BJ (cell line): ENCODE measurements at regions of chr17 and their contacts with region 1.

Region 1: GRCh38 chr17:42067351-42068091 is 17.1 kb upstream of the C17orf113 start:
- DNase-seq: no peak
- H3K4me3 ChIP-seq: no peak overlapping the region
- H3K27me3 ChIP-seq: peaks cover 13% of the 10 kb centered on the region
- CTCF ChIP-seq: peak; percentile 84

Region 2: DNA sequence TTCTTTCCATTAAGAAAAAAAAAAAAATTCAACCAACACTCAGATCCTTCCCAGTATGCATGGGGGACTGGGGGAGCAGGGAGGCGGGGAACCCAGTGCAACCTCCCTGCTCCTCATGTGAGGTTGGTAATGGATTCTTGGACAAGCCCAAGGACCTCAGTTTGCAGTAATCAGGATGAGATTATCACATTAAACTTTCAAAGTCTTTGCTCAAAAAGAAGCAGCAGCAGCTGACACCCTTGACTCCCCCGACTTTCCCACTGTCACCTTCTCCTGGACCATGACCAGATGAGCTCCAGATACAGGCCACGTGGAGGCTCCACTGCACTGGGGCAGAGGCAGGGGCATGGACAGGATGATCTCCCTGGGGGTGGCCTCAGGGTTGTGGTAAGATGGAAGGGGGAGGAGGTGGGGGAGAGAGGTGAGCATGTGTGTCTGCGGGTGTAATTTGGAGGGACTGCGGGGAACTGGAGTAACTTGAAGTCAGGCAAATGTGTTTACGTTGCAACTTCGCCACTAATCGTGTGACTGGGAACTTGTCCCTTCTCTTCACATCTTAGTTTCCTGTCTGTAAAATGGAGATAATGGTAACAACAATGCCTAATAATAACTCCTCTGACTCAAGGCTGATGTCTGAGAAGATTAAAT is 11.0 kb after region 1 on chr17:
- CTCF ChIA-PET with region 1: interaction called, 23 read pairs
- POLR2A ChIA-PET with region 1: no interaction called
- DNase-seq: no peak
- H3K4me3 ChIP-seq: no peak overlapping the region
- H3K27me3 ChIP-seq: peaks cover 14% of the 10 kb centered on the region
- CTCF ChIP-seq: no peak

Region 3: DNA sequence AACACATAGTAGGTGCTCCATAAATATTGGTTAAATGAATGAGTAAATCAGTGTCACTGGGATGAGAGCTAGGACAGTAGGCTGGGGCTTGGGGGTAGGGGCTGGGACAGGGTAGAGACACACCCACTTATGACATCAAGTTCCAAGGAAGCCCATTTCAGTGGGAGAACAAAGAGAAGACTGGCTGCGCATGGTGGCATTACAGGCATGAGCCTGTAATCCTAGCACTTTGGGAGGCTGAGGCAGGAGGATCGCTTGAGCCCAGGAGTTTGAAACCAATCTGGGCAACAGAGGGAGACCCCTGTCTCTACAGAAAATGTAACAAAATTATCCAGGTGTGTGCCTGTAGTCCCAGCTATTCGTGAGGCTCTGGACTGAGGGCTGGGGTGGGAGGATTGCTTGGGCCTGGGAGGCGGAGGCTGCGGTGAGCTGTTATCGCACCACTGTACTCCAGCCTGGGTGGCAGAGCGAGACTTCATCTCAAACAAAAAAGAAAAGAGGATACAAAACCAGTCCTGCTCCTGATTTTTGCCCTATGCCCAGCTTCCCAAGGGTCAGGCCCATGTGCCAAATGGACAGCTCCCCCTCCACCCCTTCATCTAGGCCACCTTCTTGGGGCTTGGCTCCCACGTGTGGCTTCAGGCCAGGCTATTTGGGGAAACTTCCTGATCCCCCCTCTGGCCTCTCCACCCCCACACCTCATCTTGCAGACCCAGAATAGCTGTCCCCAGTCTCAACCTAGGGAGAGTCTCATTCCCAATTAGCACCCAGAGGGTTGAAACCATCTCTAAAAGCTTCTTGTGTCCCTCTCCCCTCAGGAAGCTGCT is 23.7 kb after region 1 on chr17:
- CTCF ChIA-PET with region 1: interaction called, 46 read pairs
- POLR2A ChIA-PET with region 1: no interaction called
- DNase-seq: no peak
- H3K4me3 ChIP-seq: no peak overlapping the region
- H3K27me3 ChIP-seq: peaks cover 15% of the 10 kb centered on the region
- CTCF ChIP-seq: no peak

Region 4: GRCh38 chr17:42101513-42102319 is 34.2 kb after region 1 on chr17:
- CTCF ChIA-PET with region 1: interaction called, 46 read pairs
- POLR2A ChIA-PET with region 1: no interaction called
- DNase-seq: no peak
- H3K4me3 ChIP-seq: no peak overlapping the region
- H3K27me3 ChIP-seq: peaks cover 12% of the 10 kb centered on the region
- CTCF ChIP-seq: peak; percentile 87

Region 5: GRCh38 chr17:42112552-42113176 is 45.1 kb after region 1 on chr17 and contains the start of gene DHX58:
- CTCF ChIA-PET with region 1: interaction called, 11 read pairs
- POLR2A ChIA-PET with region 1: no interaction called
- DNase-seq: peak; percentile 47
- H3K4me3 ChIP-seq: peak within 1 kb of the TSS; percentile 47
- H3K27me3 ChIP-seq: no peaks in the 10 kb centered on the region
- CTCF ChIP-seq: no peak
- polyA plus RNA-seq, gene DHX58: 11.6 and 18.0 TPM in 2 replicates